ENCODE measurements at regions of chr7 and their contacts with region 1.

Region 1: GRCh38 chr7:35801392-35802101 is 690 bp downstream of the SEPTIN7 start:
- DNase-seq: peak; percentile 67
- H3K4me3 Mint-ChIP-seq: peak overlapping the region; percentile 97
- H3K27ac Mint-ChIP-seq: peak overlapping the region; percentile 97
- H3K4me1 Mint-ChIP-seq: peaks cover 10% of the 10 kb centered on the region
- H3K27me3 Mint-ChIP-seq: no peaks in the 10 kb centered on the region
- CTCF ChIP-seq: peak; percentile 49

Region 2: GRCh38 chr7:35492451-35493175 is 308.9 kb before region 1 on chr7:
- CTCF ChIA-PET with region 1: no interaction called
- POLR2A ChIA-PET with region 1: no interaction called
- intact Hi-C with region 1: no loop called
- DNase-seq: no peak
- H3K4me3 Mint-ChIP-seq: no peak overlapping the region
- H3K27ac Mint-ChIP-seq: no peak overlapping the region
- H3K4me1 Mint-ChIP-seq: no peaks in the 10 kb centered on the region
- H3K27me3 Mint-ChIP-seq: peaks cover 15% of the 10 kb centered on the region
- CTCF ChIP-seq: no peak

Region 3: GRCh38 chr7:35694781-35695472 is 106.6 kb before region 1 on chr7 and contains the start of gene HERPUD2:
- CTCF ChIA-PET with region 1: interaction called, 5 read pairs
- POLR2A ChIA-PET with region 1: interaction called, 113 read pairs
- intact Hi-C with region 1: loop called (anchors 5 kb)
- DNase-seq: peak; percentile 94
- H3K4me3 Mint-ChIP-seq: peak within 1 kb of the TSS; percentile 93
- H3K27ac Mint-ChIP-seq: peak within 1 kb of the TSS; percentile 96
- H3K4me1 Mint-ChIP-seq: peaks cover 29% of the 10 kb centered on the region
- H3K27me3 Mint-ChIP-seq: no peaks in the 10 kb centered on the region
- CTCF ChIP-seq: no peak
- total RNA-seq, gene HERPUD2: 28.1 and 29.0 TPM in 2 replicates

Region 4: GRCh38 chr7:35714862-35715261 is 86.7 kb before region 1 on chr7:
- CTCF ChIA-PET with region 1: interaction called, 27 read pairs
- POLR2A ChIA-PET with region 1: interaction called, 20 read pairs
- intact Hi-C with region 1: no loop called
- DNase-seq: no peak
- H3K4me3 Mint-ChIP-seq: no peak overlapping the region
- H3K27ac Mint-ChIP-seq: no peak overlapping the region
- H3K4me1 Mint-ChIP-seq: peaks cover 5% of the 10 kb centered on the region
- H3K27me3 Mint-ChIP-seq: no peaks in the 10 kb centered on the region
- CTCF ChIP-seq: no peak

Region 5: GRCh38 chr7:35816514-35816913 is 15.0 kb after region 1 on chr7:
- CTCF ChIA-PET with region 1: interaction called, 5 read pairs
- POLR2A ChIA-PET with region 1: interaction called, 18 read pairs
- intact Hi-C with region 1: no loop called
- DNase-seq: no peak
- H3K4me3 Mint-ChIP-seq: no peak overlapping the region
- H3K27ac Mint-ChIP-seq: no peak overlapping the region
- H3K4me1 Mint-ChIP-seq: peaks cover 31% of the 10 kb centered on the region
- H3K27me3 Mint-ChIP-seq: no peaks in the 10 kb centered on the region
- CTCF ChIP-seq: no peak

Region 6: DNA sequence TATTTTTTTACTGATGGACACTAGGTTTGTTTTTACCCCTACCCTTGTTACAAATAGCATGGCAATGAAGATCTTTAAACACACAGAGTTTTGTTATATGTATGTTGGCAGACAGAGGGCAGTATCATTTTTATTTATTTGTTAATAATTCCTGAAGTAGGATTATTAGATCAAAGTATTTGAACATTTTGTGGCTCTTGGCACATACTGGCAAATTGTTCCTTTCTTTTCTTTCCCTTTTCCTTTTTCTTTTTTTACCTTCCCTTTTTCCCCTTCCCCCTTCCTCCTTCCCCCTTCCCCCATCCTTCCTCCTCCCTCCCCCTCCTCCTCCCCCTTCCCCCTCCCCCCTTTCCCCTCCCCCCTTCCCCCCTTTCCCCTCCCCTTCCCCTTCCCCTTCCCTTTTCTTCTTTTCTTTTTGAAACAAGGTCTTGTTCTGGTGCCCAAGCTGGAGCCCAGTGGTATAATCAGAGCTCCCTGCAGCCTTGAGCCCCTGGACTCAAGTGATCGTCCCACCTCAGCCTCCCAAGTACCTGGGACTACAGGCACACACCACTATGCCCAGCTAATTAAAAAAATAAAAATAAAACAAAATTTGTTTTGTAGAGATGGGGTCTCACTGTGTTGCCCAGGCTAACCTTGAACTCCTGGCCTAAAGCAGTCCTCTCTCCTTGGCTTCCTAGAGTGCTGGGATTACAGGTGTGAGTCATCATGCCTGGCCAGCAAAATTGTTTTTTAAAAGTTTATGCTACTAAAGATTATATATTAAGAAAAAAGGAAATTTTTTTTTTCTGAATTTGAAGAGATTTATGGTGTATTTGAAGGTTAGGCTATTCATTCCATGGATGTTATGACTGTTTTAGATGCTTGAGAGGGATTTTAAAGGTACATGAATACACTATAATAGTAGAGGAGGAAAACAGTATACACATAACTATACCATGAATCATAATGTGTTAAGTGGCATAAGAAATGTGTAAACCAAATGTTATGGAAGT is 38.6 kb after region 1 on chr7:
- CTCF ChIA-PET with region 1: interaction called, 6 read pairs
- POLR2A ChIA-PET with region 1: interaction called, 4 read pairs
- intact Hi-C with region 1: loop called (anchors 5 kb)
- DNase-seq: peak; percentile 23
- H3K4me3 Mint-ChIP-seq: no peak overlapping the region
- H3K27ac Mint-ChIP-seq: peak overlapping the region; percentile 6
- H3K4me1 Mint-ChIP-seq: peaks cover 6% of the 10 kb centered on the region
- H3K27me3 Mint-ChIP-seq: no peaks in the 10 kb centered on the region
- CTCF ChIP-seq: no peak

Region 7: DNA sequence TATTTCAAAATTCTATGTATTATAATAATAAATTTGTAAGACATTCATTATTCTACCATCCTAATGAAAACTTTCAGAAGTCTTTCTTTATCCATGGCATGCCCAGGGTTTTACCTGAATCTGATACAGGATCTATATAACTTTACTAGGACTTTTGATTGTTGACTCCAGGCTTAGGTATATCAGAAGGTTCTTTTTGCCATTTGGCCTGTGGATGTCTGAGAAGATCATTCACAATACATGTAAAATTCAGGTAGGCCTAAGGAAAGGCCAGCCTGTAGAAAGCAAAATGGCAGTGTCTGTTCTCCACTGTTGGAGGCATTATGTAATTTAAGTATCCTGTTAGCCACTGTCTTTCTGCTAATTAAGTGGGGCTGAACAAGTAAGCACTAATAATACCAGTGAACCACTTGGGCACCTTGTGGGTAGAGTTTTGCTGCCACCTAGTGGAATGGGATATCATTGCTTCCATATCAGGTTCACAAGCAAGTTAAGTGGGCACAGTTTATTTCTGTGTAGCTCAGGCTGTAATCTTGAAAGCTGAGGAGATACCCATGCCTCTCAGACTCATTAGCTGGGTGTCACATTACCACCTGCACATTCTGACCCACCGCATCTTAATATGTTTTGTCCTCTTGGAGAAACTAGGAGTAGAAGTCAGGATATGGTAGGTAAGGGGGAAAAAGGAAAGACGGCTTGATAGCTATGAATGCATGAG is 104.8 kb after region 1 on chr7:
- CTCF ChIA-PET with region 1: interaction called, 22 read pairs
- POLR2A ChIA-PET with region 1: interaction called, 5 read pairs
- intact Hi-C with region 1: loop called (anchors 2 kb)
- DNase-seq: peak; percentile 82
- H3K4me3 Mint-ChIP-seq: no peak overlapping the region
- H3K27ac Mint-ChIP-seq: no peak overlapping the region
- H3K4me1 Mint-ChIP-seq: no peaks in the 10 kb centered on the region
- H3K27me3 Mint-ChIP-seq: no peaks in the 10 kb centered on the region
- CTCF ChIP-seq: peak; percentile 87